Gastrocnemius medialis (tissue), 4 donors: ENCODE measurements at regions of chr11 and their contacts with region 1.

Region 1: DNA sequence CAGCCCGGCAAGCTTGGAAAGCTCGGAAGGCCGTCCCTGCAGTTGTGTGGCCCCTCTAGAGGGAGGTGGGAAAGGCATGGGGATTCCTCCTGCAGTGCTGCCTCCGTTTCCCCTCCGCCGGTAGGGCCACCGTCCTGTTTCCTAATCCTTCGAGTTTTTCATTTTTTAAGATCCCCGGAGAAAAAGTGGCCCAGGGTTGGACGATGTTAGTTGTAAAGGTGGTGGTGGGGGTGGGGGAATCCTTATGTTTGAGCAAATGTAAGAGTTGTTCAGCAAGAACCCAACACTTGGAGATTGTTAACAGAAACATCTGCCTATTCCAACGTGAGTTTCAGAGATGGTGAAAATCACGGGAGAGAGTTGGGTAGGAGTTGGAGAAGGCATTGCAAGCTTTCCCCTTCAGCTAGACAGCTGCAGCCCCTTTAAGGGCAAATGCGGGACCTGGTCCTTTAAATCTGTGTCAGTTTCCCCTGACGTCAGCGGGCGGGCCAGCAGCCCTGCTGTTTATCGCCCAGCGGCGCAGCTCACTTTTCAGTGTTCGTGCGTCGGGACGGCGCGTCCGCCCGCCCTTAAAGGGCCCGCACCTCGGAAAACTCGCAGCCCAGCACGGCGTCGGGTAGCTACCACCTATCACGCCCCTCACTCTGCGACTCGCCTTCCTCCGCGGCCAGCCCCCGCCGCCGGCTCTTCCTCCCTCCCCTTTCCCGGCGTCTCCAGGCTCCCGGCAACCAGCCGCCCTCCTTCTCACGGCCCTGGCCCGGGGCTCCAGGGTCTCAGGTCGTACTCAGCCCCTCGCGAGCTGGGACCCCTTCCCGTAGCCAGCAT is at the start of gene SIDT2:
- DNase-seq: peak; percentile 91 to 93
- ATAC-seq: peak; percentile 81 to 90
- H3K4me3 ChIP-seq: peak within 1 kb of the TSS; percentile 62 to 98 (median 74)
- H3K27ac ChIP-seq: peak within 1 kb of the TSS; percentile 88 to 99 (median 89)
- H3K4me1 ChIP-seq: peaks cover 26 to 33% of the 10 kb centered on the region in 2 donors
- H3K27me3 ChIP-seq: no peaks in the 10 kb centered on the region
- CTCF ChIP-seq: peak in 1 of 5 experiments; percentile 26
- POLR2A ChIP-seq: peak; percentile 84 to 95
- total RNA-seq, gene SIDT2: 14.3 to 33.9 (median 17.7) TPM

Region 2: DNA sequence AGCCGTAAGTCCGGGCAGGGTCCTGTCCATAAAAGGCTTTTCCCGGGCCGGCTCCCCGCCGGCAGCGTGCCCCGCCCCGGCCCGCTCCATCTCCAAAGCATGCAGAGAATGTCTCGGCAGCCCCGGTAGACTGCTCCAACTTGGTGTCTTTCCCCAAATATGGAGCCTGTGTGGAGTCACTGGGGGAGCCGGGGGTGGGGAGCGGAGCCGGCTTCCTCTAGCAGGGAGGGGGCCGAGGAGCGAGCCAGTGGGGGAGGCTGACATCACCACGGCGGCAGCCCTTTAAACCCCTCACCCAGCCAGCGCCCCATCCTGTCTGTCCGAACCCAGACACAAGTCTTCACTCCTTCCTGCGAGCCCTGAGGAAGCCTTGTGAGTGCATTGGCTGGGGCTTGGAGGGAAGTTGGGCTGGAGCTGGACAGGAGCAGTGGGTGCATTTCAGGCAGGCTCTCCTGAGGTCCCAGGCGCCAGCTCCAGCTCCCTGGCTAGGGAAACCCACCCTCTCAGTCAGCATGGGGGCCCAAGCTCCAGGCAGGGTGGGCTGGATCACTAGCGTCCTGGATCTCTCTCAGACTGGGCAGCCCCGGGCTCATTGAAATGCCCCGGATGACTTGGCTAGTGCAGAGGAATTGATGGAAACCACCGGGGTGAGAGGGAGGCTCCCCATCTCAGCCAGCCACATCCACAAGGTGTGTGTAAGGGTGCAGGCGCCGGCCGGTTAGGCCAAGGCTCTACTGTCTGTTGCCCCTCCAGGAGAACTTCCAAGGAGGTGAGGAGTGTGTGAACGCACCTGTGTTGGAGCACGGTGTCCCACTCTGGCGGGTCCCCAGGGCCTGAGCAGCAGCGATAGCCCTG is 20.9 kb after region 1 on chr11 and contains the start of gene TAGLN:
- in situ Hi-C with region 1: no loop called
- intact Hi-C with region 1: no loop called
- DNase-seq: peak in 1 of 2 donors; percentile 73
- ATAC-seq: peak; percentile 46 to 52
- H3K4me3 ChIP-seq: peak within 1 kb of the TSS; percentile 40 to 57 (median 44)
- H3K27ac ChIP-seq: peak within 1 kb of the TSS; percentile 74 to 78 (median 76)
- H3K4me1 ChIP-seq: peaks cover 17 to 20% of the 10 kb centered on the region in 2 donors
- H3K27me3 ChIP-seq: no peaks in the 10 kb centered on the region
- CTCF ChIP-seq: no peak
- POLR2A ChIP-seq: peak in 1 of 2 donors; percentile 47
- total RNA-seq, gene TAGLN: 27.4 to 191 (median 124) TPM

Region 3: DNA sequence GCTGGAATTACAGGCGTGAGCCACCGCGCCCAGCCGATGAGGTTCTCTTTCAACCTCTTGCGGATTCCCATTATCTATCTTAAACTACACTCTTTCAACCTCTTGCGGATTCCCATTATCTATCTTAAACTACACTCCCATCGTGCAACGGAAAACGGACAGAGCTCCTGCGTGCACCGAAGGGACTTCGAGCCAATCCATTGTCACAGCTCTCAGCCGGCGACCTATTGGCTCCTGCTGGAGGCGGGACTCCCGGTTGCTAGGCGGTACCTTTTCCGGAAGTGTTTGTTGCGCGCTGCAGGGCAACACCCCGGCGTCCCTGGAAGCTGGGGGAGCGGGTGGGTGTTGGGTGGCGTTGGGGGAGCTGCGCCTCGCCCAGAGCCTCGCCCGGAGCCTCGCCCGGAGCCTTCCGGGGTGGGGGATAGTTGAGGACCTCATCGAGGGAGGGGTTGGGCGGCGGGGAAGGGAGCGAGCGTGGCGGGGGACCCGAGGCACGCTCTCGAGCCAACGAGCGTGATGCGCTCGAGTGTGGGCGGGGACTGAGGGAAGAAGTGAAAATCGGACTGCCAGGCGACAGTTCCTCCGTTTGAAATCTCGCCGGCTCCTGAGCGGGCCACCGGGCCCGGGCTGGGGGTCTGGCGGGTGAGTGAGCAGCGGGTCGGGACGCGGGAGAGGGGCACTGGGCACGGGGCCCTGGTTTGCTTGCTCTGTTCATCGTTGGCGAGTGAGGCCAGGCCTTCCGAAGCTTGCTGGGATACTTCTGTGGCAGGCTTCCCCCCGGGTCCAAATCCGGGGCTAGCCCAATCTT is 149.3 kb after region 1 on chr11 and contains the start of gene CEP164:
- in situ Hi-C with region 1: no loop called
- intact Hi-C with region 1: loop called (anchors 10 kb)
- DNase-seq: peak; percentile 94 to 95
- ATAC-seq: peak; percentile 98 to 99
- H3K4me3 ChIP-seq: peak within 1 kb of the TSS; percentile 66 to 90 (median 77)
- H3K27ac ChIP-seq: peak within 1 kb of the TSS; percentile 85 to 91 (median 86)
- H3K4me1 ChIP-seq: peaks cover 9% of the 10 kb centered on the region in 2 donors
- H3K27me3 ChIP-seq: no peaks in the 10 kb centered on the region
- CTCF ChIP-seq: no peak
- POLR2A ChIP-seq: peak; percentile 42 to 63
- total RNA-seq, gene CEP164: 3.4 to 9.2 (median 5.8) TPM